ENCODE measurements at regions of chr3 and their contacts with region 1.

Region 1: DNA sequence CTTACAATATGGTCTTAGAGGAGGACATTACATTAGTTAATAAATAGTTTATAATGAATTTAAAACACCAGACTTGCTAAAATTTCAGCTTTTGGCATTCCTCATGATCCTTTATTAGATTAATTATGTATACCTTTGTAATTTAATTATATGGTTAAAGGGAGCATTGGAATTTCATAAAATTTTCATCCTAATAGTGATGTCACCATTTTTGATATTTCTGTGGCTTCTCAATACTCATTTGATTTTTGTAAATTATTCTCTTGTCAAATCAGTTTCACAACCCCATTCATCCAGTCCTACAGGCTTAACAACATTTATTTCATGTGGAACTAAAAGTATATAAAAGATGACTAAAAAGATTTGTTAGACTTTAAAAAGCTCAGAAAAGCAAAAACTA is 5.9 kb upstream of the NEK10 start:
- DNase-seq: no peak
- H3K4me3 ChIP-seq: no peak overlapping the region
- CTCF ChIP-seq: no peak

Region 2: GRCh38 chr3:27319847-27320526 is 55.1 kb before region 1 on chr3:
- CTCF ChIA-PET with region 1: no interaction called
- POLR2A ChIA-PET with region 1: no interaction called
- DNase-seq: no peak
- H3K4me3 ChIP-seq: no peak overlapping the region
- CTCF ChIP-seq: no peak

Region 3: GRCh38 chr3:27357665-27358258 is 17.3 kb before region 1 on chr3:
- CTCF ChIA-PET with region 1: interaction called, 11 read pairs
- POLR2A ChIA-PET with region 1: no interaction called
- DNase-seq: no peak
- H3K4me3 ChIP-seq: no peak overlapping the region
- CTCF ChIP-seq: peak; percentile 47

Region 4: GRCh38 chr3:27392950-27393679 is 18.0 kb after region 1 on chr3:
- CTCF ChIA-PET with region 1: no interaction called
- POLR2A ChIA-PET with region 1: no interaction called
- DNase-seq: no peak
- H3K4me3 ChIP-seq: no peak overlapping the region
- CTCF ChIP-seq: no peak